Common myeloid progenitor, CD34-positive (primary cell): ENCODE measurements at regions of chr12 and their contacts with region 1.

Region 1: GRCh38 chr12:91382081-91382543 is 199.5 kb upstream of the DCN start:
- DNase-seq: peak; percentile 81 to 90 (median 88)
- H3K4me3 ChIP-seq: peak overlapping the region in 6 of 7 experiments; percentile 53 to 96 (median 74)
- H3K27ac ChIP-seq: peak overlapping the region; percentile 78 to 92
- H3K4me1 ChIP-seq: peaks cover 6 to 11% (median 8%) of the 10 kb centered on the region in 4 experiments
- H3K27me3 ChIP-seq: no peaks in the 10 kb centered on the region

Region 2: GRCh38 chr12:91370086-91370868 is 11.8 kb before region 1 on chr12:
- CTCF ChIA-PET with region 1: interaction called, 11 read pairs
- POLR2A ChIA-PET with region 1: no interaction called
- DNase-seq: peak in 2 of 3 donors; percentile 12 to 17
- H3K4me3 ChIP-seq: no peak overlapping the region
- H3K27ac ChIP-seq: no peak overlapping the region
- H3K4me1 ChIP-seq: peaks cover 0 to 8% (median 1%) of the 10 kb centered on the region in 4 experiments
- H3K27me3 ChIP-seq: no peaks in the 10 kb centered on the region

Region 3: DNA sequence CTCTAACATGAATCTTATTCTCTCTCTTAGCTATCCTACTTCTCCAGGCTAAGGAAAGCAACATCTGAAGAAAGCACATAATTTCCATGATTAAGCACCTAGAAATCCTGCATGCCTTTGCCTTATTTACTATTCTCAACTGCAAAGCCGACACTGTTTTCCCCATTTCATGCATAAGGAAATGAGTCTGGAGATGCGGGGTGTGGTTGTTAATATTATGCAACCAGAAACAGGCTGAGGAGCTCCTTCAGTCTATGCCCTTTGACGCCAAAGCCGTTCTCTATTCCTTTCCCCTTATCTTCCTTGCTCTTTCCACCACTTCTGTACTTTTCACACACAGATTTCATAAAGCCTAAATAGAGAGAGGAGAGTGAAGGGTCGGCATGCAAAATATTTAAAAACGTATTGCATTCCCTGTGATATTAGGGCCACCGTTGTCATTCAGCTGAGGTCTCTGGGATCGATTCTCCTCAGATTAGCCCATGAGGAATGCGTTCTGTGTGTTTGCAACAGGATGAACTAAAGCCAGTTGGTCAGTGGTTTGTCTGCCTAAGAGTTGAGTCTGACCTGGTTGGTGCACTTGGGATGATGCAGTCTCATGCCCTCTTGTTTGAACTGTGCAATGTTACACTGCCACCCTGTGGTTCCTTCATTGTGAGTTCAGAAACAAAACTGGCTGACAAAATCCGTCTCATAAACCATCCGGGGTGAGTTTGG is 1267.6 kb after region 1 on chr12:
- CTCF ChIA-PET with region 1: interaction called, 32 read pairs
- POLR2A ChIA-PET with region 1: no interaction called
- DNase-seq: peak; percentile 59 to 78 (median 76)
- H3K4me3 ChIP-seq: no peak overlapping the region
- H3K27ac ChIP-seq: no peak overlapping the region
- H3K4me1 ChIP-seq: no peaks in the 10 kb centered on the region
- H3K27me3 ChIP-seq: no peaks in the 10 kb centered on the region